SK-N-SH (cell line): ENCODE measurements at regions of chr2 and their contacts with region 1.

Region 1: DNA sequence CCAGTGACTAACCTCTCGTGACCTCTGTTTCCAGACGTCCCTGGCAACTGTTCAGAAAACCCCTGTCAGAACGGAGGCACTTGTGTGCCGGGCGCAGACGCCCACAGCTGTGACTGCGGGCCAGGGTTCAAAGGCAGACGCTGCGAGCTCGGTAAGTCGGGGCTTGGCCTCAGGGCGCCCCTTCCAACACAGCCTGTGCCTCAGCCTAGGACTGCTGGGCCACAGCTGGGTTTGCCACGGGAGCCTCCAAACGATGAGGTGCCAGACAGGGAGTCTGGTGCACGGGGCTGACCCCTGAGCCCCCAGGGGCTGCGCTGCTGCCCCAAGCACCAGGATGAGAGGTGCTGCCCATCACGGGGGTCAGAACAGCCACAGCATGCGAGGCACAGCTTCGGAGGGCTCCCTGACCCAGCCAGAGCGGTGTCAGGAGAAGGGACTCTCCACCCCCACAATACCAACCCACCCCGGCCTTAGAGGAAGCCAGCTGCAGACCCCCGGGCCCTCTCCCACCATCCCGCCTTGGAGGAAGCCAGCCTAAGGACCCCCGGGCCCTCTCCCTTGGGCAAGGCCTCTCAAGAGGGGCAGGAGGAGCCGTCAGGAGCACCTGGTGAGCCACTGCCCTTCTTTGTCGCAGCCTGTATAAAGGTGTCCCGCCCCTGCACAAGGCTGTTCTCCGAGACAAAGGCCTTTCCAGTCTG is 20.3 kb downstream of the MTERF4 start:
- DNase-seq: peak; percentile 32
- H3K4me3 ChIP-seq: no peak overlapping the region
- H3K27ac ChIP-seq: peak overlapping the region in 1 of 2 experiments; percentile 28; a peak in 1 of 4 replicates
- H3K4me1 ChIP-seq: peaks cover 0 to 13% of the 10 kb centered on the region in 2 experiments; a peak in 1 of 4 replicates
- H3K27me3 ChIP-seq: no peaks in the 10 kb centered on the region
- CTCF ChIP-seq: no peak
- EP300 ChIP-seq: no peak
- RAD21 ChIP-seq: no peak

Region 2: DNA sequence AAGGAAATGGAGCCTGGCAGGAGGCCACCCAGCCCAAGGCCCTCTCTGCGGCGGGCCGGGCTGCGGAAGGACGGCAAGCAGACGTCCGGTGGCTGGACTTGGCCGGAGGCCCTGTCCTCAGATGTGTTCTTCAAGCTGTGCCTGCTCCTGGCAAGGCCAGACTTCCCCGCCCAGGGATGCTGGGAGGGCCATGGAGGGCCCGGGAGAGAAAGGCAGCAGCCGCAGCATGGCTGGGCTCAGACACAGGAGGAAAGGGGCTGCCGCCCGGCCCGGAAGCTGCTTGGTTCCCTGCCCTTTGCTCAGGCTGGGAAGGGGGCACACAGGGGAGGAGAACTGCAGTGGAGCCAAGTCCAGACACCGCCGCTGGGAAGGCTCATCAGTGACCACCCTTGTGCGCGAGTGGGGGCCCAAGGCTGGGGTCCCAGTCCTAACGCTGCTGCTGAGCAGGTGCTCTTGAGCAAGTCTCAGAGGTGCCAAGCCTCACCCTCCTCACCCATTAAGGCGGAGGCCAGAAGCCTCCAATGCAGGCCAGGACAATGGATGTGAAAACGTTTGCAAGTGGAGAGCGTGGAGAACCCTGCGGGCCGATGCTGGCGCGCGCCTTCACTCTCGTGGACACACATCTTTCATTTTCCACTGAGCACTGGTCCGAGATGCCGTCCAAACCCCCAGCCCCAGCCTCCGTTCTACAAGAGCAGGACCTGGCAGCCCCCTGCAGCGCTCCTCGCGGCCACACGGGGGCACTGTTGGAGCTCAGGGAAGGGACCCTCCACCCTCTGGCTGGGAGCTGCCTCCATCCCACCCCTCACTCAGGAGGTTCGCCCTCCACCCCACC is 167.8 kb before region 1 on chr2:
- CTCF ChIA-PET with region 1: interaction called, 13 read pairs
- POLR2A ChIA-PET with region 1: interaction called, 3 read pairs
- DNase-seq: peak; percentile 94
- H3K4me3 ChIP-seq: peak overlapping the region in 1 of 2 experiments; percentile 40; a peak in 1 of 4 replicates
- H3K27ac ChIP-seq: no peak overlapping the region; a peak in 1 of 4 replicates
- H3K4me1 ChIP-seq: peaks cover 3 to 52% of the 10 kb centered on the region in 2 experiments; a peak in 1 of 4 replicates
- H3K27me3 ChIP-seq: no peaks in the 10 kb centered on the region
- CTCF ChIP-seq: peak; percentile 93
- EP300 ChIP-seq: no peak
- RAD21 ChIP-seq: peak; percentile 82

Region 3: DNA sequence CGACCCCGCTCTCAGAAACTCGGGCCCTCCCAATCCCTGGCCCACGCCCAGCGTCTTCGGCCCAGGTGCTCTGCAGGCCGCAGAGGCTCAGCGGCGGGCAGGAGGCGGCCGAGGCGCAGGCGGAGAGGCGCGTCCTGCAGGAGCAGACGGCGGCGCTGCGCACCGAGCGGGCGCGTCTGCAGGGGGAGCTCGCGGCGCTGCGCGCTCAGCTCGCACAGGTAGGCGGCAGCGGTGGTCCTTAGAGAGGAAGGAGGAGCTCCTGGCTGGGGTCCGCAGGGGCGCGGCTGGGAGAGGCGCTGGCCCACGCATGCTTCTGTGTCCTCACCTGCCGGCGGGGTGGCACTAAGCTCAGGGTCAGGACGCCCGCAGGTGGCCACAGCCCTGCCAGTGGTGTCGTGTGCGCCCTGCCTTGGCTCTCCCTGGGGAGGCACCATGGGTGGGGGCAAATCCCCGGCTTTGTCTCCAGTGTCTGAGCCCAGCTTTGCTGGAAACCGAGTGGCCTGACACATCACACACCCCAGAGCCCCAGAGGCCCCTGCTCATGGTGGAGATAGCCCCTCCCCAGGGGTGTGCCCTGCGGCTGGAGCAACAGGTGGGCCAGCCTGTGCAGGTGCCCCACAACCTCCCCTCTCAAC is 98.3 kb before region 1 on chr2:
- CTCF ChIA-PET with region 1: interaction called, 11 read pairs
- POLR2A ChIA-PET with region 1: no interaction called
- DNase-seq: peak; percentile 76
- H3K4me3 ChIP-seq: no peak overlapping the region
- H3K27ac ChIP-seq: no peak overlapping the region
- H3K4me1 ChIP-seq: peaks cover 0 to 5% of the 10 kb centered on the region in 2 experiments; a peak in 2 of 4 replicates
- H3K27me3 ChIP-seq: no peaks in the 10 kb centered on the region
- CTCF ChIP-seq: peak; percentile 35
- EP300 ChIP-seq: no peak
- RAD21 ChIP-seq: peak; percentile 41; the same call in 1 of the 2 replicates

Region 4: DNA sequence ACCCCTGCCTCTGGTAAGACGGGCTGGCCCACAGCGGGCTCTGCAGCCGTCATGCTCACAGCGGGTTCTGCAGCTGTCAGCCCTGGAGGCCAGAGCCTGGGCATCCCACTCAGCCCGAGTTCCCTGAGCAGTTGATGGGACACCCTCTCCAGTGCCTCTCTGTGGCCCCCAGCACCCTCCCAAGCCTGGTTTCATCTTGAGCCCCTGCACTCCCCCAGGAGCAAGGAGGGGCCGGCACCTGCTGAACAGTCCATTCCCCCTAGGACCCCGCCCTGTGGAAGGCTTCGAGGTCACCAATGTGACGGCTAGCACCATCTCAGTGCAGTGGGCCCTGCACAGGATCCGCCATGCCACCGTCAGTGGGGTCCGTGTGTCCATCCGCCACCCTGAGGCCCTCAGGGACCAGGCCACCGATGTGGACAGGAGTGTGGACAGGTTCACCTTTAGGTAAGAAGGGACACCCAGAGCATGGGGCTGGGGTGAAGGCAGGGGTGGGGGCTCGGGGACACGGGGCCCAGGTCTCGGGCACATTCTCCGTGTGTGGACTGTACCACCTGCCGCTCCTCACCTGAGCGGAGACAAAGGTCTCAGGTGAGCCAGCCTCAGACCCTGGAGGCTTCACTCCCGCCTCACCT is 14.2 kb before region 1 on chr2:
- CTCF ChIA-PET with region 1: interaction called, 11 read pairs
- POLR2A ChIA-PET with region 1: no interaction called
- DNase-seq: no peak
- H3K4me3 ChIP-seq: no peak overlapping the region
- H3K27ac ChIP-seq: no peak overlapping the region
- H3K4me1 ChIP-seq: no peaks in the 10 kb centered on the region; a peak in 1 of 4 replicates
- H3K27me3 ChIP-seq: no peaks in the 10 kb centered on the region
- CTCF ChIP-seq: no peak
- EP300 ChIP-seq: no peak
- RAD21 ChIP-seq: no peak

Region 5: GRCh38 chr2:241092677-241093076 is 10.9 kb after region 1 on chr2:
- CTCF ChIA-PET with region 1: interaction called, 10 read pairs
- POLR2A ChIA-PET with region 1: no interaction called
- DNase-seq: no peak
- H3K4me3 ChIP-seq: no peak overlapping the region
- H3K27ac ChIP-seq: no peak overlapping the region
- H3K4me1 ChIP-seq: no peaks in the 10 kb centered on the region
- H3K27me3 ChIP-seq: no peaks in the 10 kb centered on the region
- CTCF ChIP-seq: no peak
- EP300 ChIP-seq: no peak
- RAD21 ChIP-seq: no peak

Region 6: DNA sequence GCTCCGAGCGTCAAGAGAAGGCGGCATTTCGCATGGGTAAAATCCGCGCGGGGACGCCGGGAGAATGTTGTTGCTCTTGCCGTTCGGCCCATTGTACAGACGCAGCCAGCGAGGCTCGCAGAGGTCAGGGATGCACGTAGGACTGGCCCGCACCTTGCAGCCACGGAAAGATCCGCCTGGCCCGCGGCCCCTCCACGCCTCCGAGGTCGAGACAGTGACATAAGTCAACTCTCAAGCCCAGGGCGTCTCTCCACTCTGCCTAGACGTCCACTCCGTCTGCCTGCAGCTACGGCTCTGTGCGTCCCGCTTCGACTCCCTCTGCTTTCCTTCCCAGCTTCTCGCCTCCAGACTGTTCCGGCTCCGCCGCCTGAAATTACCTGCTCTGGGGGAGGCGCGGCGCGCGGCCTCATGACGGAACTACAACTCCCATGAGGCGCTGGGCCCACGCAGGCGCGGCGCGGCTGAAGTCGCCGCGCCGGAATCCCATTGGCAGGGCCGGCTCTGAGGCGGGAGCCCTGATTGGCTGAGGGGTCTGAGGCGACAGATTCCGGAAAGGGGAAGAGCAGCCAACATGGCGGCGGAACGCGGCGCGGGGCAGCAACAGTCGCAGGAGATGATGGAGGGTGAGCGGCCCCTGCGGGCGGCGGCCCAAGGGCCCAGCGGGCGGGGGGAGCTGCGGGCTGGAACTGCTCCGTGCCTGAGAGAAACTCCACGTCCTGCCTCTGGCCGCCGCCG is 68.3 kb after region 1 on chr2 and contains the start of gene PPP1R7:
- CTCF ChIA-PET with region 1: interaction called, 10 read pairs
- POLR2A ChIA-PET with region 1: no interaction called
- DNase-seq: peak; percentile 98
- H3K4me3 ChIP-seq: peak within 1 kb of the TSS; percentile 81 to 94
- H3K27ac ChIP-seq: peak within 1 kb of the TSS; percentile 14 to 67; a peak in 2 of 4 replicates
- H3K4me1 ChIP-seq: peaks cover 6 to 18% of the 10 kb centered on the region in 2 experiments; a peak in 3 of 4 replicates
- H3K27me3 ChIP-seq: no peaks in the 10 kb centered on the region
- CTCF ChIP-seq: no peak
- EP300 ChIP-seq: no peak
- RAD21 ChIP-seq: 0 out of 2 replicates have a peak, but pooled peaks have one; percentile 16
- polyA plus RNA-seq, gene PPP1R7: 47.2 and 56.9 TPM in 2 replicates

Region 7: GRCh38 chr2:241234962-241235740 is 153.4 kb after region 1 on chr2:
- CTCF ChIA-PET with region 1: no interaction called
- POLR2A ChIA-PET with region 1: no interaction called
- DNase-seq: no peak
- H3K4me3 ChIP-seq: no peak overlapping the region
- H3K27ac ChIP-seq: no peak overlapping the region
- H3K4me1 ChIP-seq: no peaks in the 10 kb centered on the region
- H3K27me3 ChIP-seq: no peaks in the 10 kb centered on the region
- CTCF ChIP-seq: no peak
- EP300 ChIP-seq: no peak
- RAD21 ChIP-seq: no peak

Region 8: GRCh38 chr2:241271641-241272297 is 190.0 kb after region 1 on chr2:
- CTCF ChIA-PET with region 1: no interaction called
- POLR2A ChIA-PET with region 1: no interaction called
- DNase-seq: peak; percentile 78
- H3K4me3 ChIP-seq: peak overlapping the region; percentile 77 to 87
- H3K27ac ChIP-seq: peak overlapping the region; percentile 69 to 76; a peak in 3 of 4 replicates
- H3K4me1 ChIP-seq: peaks cover 19 to 38% of the 10 kb centered on the region in 2 experiments; a peak in 3 of 4 replicates
- H3K27me3 ChIP-seq: no peaks in the 10 kb centered on the region
- CTCF ChIP-seq: no peak
- EP300 ChIP-seq: no peak
- RAD21 ChIP-seq: no peak; the same call in 1 of the 2 replicates